PC-9 (cell line): ENCODE measurements at regions of chr11 and their contacts with region 1.

Region 1: DNA sequence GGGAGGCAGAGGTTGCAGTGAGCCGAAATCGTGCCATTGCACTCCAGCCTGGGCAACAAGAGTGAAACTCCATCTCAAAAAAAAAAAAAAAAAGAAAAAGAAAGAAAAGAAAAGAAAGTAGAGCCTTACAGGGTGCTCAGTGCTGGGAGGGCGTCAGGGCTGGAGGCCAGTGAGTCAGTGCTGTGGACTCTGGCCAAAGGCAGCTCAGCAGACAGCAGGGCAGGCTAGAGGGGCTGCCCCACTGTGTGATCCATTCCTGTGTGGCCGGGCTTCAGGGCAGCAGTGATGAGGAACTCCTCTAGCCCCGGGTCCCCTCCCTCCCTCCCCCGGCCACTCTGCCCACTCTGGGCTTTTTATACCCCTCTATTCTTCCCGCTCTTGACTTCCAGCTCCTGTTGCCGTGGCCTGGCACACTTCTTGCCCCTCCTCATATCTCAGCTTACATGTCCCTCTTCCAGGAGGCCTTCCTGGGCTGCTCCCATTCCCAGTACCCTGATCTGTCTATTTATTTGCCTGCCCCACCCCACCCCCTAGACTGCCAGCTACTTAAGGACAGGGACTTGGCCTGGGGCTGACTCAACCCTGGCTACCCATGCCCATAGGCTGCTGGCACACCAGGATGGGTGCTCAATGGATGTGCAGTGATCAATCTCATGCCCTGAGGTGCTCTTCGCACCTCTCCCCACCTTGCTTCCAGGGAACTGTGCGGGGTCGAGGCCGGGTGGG is 10.1 kb downstream of the SYT12 start:
- DNase-seq: peak; percentile 71 to 79
- H3K4me3 ChIP-seq: peak overlapping the region; percentile 22; the same call in 1 of the 2 replicates
- H3K27ac ChIP-seq: peak overlapping the region; percentile 77
- H3K4me1 ChIP-seq: peaks cover 52% of the 10 kb centered on the region
- H3K27me3 ChIP-seq: no peaks in the 10 kb centered on the region
- CTCF ChIP-seq: no peak

Region 2: GRCh38 chr11:65773784-65774411 is 1259.1 kb before region 1 on chr11:
- CTCF ChIA-PET with region 1: interaction called, 10 read pairs
- POLR2A ChIA-PET with region 1: no interaction called
- intact Hi-C with region 1: no loop called
- DNase-seq: no peak
- H3K4me3 ChIP-seq: no peak overlapping the region
- H3K27ac ChIP-seq: no peak overlapping the region
- H3K4me1 ChIP-seq: peaks cover 32% of the 10 kb centered on the region
- H3K27me3 ChIP-seq: no peaks in the 10 kb centered on the region
- CTCF ChIP-seq: no peak

Region 3: GRCh38 chr11:66846671-66847091 is 186.3 kb before region 1 on chr11:
- CTCF ChIA-PET with region 1: no interaction called
- POLR2A ChIA-PET with region 1: no interaction called
- intact Hi-C with region 1: no loop called
- DNase-seq: peak; percentile 71 to 97
- H3K4me3 ChIP-seq: no peak overlapping the region
- H3K27ac ChIP-seq: peak overlapping the region; percentile 66
- H3K4me1 ChIP-seq: peaks cover 53% of the 10 kb centered on the region
- H3K27me3 ChIP-seq: no peaks in the 10 kb centered on the region
- CTCF ChIP-seq: no peak

Region 4: GRCh38 chr11:66958232-66958955 is 74.6 kb before region 1 on chr11 and contains the start of gene PC:
- CTCF ChIA-PET with region 1: no interaction called
- POLR2A ChIA-PET with region 1: no interaction called
- intact Hi-C with region 1: loop called (anchors 5 kb)
- DNase-seq: peak; percentile 99 to 100
- H3K4me3 ChIP-seq: peak within 1 kb of the TSS; percentile 63
- H3K27ac ChIP-seq: no peak within 1 kb of the TSS
- H3K4me1 ChIP-seq: peaks cover 22% of the 10 kb centered on the region
- H3K27me3 ChIP-seq: no peaks in the 10 kb centered on the region
- CTCF ChIP-seq: no peak
- total RNA-seq, gene PC: 34.9 and 38.9 TPM in 2 replicates

Region 5: GRCh38 chr11:66981976-66982578 is 50.9 kb before region 1 on chr11:
- CTCF ChIA-PET with region 1: no interaction called
- POLR2A ChIA-PET with region 1: no interaction called
- intact Hi-C with region 1: loop called (anchors 1 kb)
- DNase-seq: peak; percentile 93 to 95
- H3K4me3 ChIP-seq: no peak overlapping the region
- H3K27ac ChIP-seq: peak overlapping the region; percentile 25; the same call in 1 of the 2 replicates
- H3K4me1 ChIP-seq: peaks cover 31% of the 10 kb centered on the region
- H3K27me3 ChIP-seq: no peaks in the 10 kb centered on the region
- CTCF ChIP-seq: no peak

Region 6: GRCh38 chr11:67211656-67212436 is 178.9 kb after region 1 on chr11:
- CTCF ChIA-PET with region 1: interaction called, 12 read pairs
- POLR2A ChIA-PET with region 1: no interaction called
- intact Hi-C with region 1: no loop called
- DNase-seq: no peak
- H3K4me3 ChIP-seq: no peak overlapping the region
- H3K27ac ChIP-seq: no peak overlapping the region
- H3K4me1 ChIP-seq: no peaks in the 10 kb centered on the region
- H3K27me3 ChIP-seq: no peaks in the 10 kb centered on the region
- CTCF ChIP-seq: no peak